ENCODE measurements at regions of chr14 and their contacts with region 1.

Region 1: DNA sequence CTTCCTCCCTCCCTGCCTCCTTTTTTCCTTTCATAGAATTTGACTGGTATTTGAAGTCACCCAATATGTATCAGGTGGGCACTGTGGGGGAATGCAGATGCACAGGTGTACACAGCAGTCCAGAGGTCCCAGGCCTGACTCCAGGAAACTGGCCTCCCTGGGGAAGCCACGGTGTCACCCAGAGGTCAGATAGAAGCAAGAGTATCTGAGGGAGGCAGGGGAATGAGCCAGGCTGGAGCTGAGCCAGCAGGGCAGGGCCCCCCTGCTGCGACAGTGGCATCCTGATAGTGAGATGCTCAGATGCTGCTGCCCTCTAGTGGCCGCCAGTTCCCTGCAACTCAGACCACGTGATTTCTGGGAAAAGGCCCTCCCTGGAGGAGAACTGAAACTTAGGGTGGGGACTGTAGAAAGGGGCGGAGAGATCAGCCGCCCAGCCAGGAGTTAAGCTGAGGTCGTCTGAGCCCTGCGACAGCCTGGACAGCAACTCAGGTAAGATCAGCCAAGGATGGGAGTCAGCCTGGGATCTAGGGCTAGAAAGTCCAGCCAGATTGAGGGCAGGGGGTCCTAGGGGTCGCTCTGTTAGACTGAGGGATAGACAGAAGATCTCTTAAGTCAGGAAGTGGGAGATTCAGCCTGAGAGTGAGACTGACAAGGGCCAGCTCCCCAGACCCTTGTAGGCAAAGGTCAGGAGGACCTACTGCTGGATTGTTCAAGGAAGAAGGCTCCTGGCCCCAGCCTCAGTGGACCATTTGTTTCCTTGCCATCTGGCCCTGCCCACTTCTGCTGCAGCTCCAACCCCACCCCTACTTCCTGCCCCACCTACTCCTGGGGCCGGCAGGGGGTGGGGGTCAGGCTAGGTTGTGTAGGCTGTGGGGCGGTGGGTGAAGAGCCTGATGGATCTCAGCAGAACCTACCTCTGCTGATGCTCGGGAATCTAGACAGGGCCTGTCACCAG is at the start of gene IRF9:
- DNase-seq: peak; percentile 95 to 99 (median 97)
- ATAC-seq: peak; percentile 85
- H3K4me3 ChIP-seq: peak within 1 kb of the TSS; percentile 80 to 90
- H3K4me3 Mint-ChIP-seq: peak within 1 kb of the TSS; percentile 99
- H3K27ac ChIP-seq: peak within 1 kb of the TSS; percentile 92 to 94
- H3K27ac Mint-ChIP-seq: peak within 1 kb of the TSS; percentile 99
- H3K4me1 ChIP-seq: peaks cover 47% of the 10 kb centered on the region
- H3K4me1 Mint-ChIP-seq: peaks cover 49% of the 10 kb centered on the region
- H3K27me3 ChIP-seq: no peaks in the 10 kb centered on the region
- H3K27me3 Mint-ChIP-seq: no peaks in the 10 kb centered on the region
- CTCF ChIP-seq: peak; percentile 92
- total RNA-seq, gene IRF9: 270 to 307 TPM

Region 2: GRCh38 chr14:24013654-24014514 is 147.2 kb before region 1 on chr14:
- CTCF ChIA-PET with region 1: interaction called, 3 read pairs
- POLR2A ChIA-PET with region 1: no interaction called
- intact Hi-C with region 1: loop called (anchors 2 kb)
- DNase-seq: peak in 8 of 9 experiments; percentile 14 to 84 (median 50)
- ATAC-seq: peak; percentile 99
- H3K4me3 ChIP-seq: no peak overlapping the region
- H3K4me3 Mint-ChIP-seq: no peak overlapping the region
- H3K27ac ChIP-seq: no peak overlapping the region
- H3K27ac Mint-ChIP-seq: no peak overlapping the region
- H3K4me1 ChIP-seq: peaks cover 7% of the 10 kb centered on the region
- H3K4me1 Mint-ChIP-seq: peaks cover 25% of the 10 kb centered on the region
- H3K27me3 ChIP-seq: no peaks in the 10 kb centered on the region
- H3K27me3 Mint-ChIP-seq: no peaks in the 10 kb centered on the region
- CTCF ChIP-seq: peak; percentile 93

Region 3: DNA sequence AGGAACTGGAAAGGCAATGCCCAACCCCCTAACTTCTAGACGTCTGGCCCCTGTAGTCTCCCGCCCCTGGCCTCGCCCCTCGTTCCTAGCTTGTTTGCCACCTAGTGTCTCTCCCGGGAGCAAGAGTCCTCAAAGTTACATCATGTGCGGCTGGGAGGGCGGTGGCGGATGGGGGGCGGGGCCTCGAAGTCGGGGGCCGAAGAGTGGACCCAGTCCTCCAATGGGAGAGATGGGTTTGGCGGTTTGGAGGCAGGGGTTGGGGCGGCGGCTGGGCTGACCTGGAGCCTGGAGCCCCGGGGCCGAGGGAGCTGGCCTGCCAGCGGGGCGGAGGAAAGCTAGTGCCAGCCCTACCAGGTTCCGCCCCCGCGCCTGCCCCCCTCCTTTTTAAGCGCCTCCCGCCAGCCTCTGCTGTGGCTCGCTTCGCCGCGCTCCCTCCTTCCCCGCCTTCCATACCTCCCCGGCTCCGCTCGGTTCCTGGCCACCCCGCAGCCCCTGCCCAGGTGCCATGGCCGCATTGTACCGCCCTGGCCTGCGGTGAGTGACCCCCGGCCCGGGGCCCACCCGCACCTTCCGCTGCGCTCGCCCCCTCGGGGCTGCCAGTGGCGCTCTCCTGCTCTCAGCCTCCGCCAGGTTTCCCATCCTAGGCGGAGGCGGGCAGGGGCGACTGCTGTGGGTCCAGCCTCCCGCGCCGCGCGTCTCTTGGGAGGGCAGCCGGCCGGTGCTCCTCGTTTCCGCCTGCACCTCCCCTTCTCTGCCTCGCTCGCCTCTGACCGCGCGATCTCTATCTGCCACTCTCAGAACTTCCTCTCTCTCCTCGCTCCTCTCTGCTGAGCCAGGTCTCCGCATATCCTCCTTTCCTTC is 67.0 kb before region 1 on chr14 and contains the start of gene PCK2:
- CTCF ChIA-PET with region 1: interaction called, 12 read pairs
- POLR2A ChIA-PET with region 1: interaction called, 3 read pairs
- intact Hi-C with region 1: loop called in 1 of 2 experiments (anchors 5 kb)
- DNase-seq: peak; percentile 39 to 82 (median 68)
- ATAC-seq: peak; percentile 79
- H3K4me3 ChIP-seq: peak within 1 kb of the TSS; percentile 69 to 99
- H3K4me3 Mint-ChIP-seq: peak within 1 kb of the TSS; percentile 98
- H3K27ac ChIP-seq: peak within 1 kb of the TSS; percentile 69 to 76
- H3K27ac Mint-ChIP-seq: peak within 1 kb of the TSS; percentile 98
- H3K4me1 ChIP-seq: peaks cover 19% of the 10 kb centered on the region
- H3K4me1 Mint-ChIP-seq: peaks cover 37% of the 10 kb centered on the region
- H3K27me3 ChIP-seq: no peaks in the 10 kb centered on the region
- H3K27me3 Mint-ChIP-seq: no peaks in the 10 kb centered on the region
- CTCF ChIP-seq: no peak
- total RNA-seq, gene PCK2: 4.9 to 5.2 TPM

Region 4: GRCh38 chr14:24135834-24136542 is 25.1 kb before region 1 on chr14 and contains the start of gene PSME1:
- CTCF ChIA-PET with region 1: interaction called, 12 read pairs
- POLR2A ChIA-PET with region 1: interaction called, 14 read pairs
- intact Hi-C with region 1: loop called (anchors 1 kb)
- DNase-seq: peak; percentile 89 to 97 (median 94)
- ATAC-seq: peak; percentile 98
- H3K4me3 ChIP-seq: peak within 1 kb of the TSS; percentile 78 to 91
- H3K4me3 Mint-ChIP-seq: peak within 1 kb of the TSS; percentile 90
- H3K27ac ChIP-seq: peak within 1 kb of the TSS; percentile 81 to 83
- H3K27ac Mint-ChIP-seq: peak within 1 kb of the TSS; percentile 93
- H3K4me1 ChIP-seq: peaks cover 54% of the 10 kb centered on the region
- H3K4me1 Mint-ChIP-seq: peaks cover 65% of the 10 kb centered on the region
- H3K27me3 ChIP-seq: no peaks in the 10 kb centered on the region
- H3K27me3 Mint-ChIP-seq: no peaks in the 10 kb centered on the region
- CTCF ChIP-seq: no peak
- total RNA-seq, gene PSME1: 200 to 207 TPM

Region 5: GRCh38 chr14:24146978-24147760 is 14.0 kb before region 1 on chr14 and contains the start of gene RNF31:
- CTCF ChIA-PET with region 1: interaction called, 53 read pairs
- POLR2A ChIA-PET with region 1: interaction called, 30 read pairs
- intact Hi-C with region 1: loop called (anchors 1 kb)
- DNase-seq: peak; percentile 93 to 99 (median 97)
- ATAC-seq: peak; percentile 89
- H3K4me3 ChIP-seq: peak within 1 kb of the TSS; percentile 96 to 99
- H3K4me3 Mint-ChIP-seq: peak within 1 kb of the TSS; percentile 95
- H3K27ac ChIP-seq: peak within 1 kb of the TSS; percentile 79 to 91
- H3K27ac Mint-ChIP-seq: peak within 1 kb of the TSS; percentile 93
- H3K4me1 ChIP-seq: peaks cover 34% of the 10 kb centered on the region
- H3K4me1 Mint-ChIP-seq: peaks cover 53% of the 10 kb centered on the region
- H3K27me3 ChIP-seq: no peaks in the 10 kb centered on the region
- H3K27me3 Mint-ChIP-seq: no peaks in the 10 kb centered on the region
- CTCF ChIP-seq: no peak
- total RNA-seq, gene RNF31: 45.4 to 51.7 TPM

Region 6: DNA sequence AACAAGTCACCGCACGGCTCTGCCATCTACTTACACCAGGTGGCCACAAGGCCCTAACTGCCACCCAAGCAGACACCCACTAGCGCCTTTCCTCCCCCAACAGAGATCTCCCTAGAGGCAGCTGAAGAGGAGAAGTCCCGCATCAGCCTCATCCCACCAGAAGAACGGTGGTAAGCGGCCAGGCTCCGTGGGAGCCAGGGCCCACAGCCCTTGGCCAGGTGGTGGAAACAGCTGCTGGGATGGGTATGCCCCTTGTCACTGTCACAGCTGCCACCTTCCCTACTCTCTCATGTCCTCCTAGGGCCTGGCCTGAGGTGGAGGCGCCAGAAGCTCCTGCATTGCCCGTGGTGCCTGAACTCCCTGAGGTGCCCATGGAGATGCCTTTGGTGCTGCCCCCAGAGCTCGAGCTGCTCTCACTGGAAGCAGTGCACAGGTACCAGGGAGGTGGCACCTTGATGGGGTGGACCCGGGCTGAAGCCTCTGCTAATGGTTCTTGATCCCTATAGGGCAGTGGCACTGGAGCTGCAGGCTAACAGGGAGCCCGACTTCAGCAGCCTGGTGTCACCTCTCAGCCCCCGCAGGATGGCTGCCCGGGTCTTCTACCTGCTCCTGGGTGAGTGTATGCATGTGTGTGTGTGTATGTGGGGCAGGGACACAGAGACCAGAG is 18.3 kb after region 1 on chr14:
- CTCF ChIA-PET with region 1: interaction called, 11 read pairs
- POLR2A ChIA-PET with region 1: interaction called, 4 read pairs
- intact Hi-C with region 1: no loop called
- DNase-seq: no peak
- ATAC-seq: no peak
- H3K4me3 ChIP-seq: no peak overlapping the region
- H3K4me3 Mint-ChIP-seq: no peak overlapping the region
- H3K27ac ChIP-seq: no peak overlapping the region
- H3K27ac Mint-ChIP-seq: peak overlapping the region; percentile 14
- H3K4me1 ChIP-seq: no peaks in the 10 kb centered on the region
- H3K4me1 Mint-ChIP-seq: peaks cover 2% of the 10 kb centered on the region
- H3K27me3 ChIP-seq: no peaks in the 10 kb centered on the region
- H3K27me3 Mint-ChIP-seq: no peaks in the 10 kb centered on the region
- CTCF ChIP-seq: no peak

Region 7: DNA sequence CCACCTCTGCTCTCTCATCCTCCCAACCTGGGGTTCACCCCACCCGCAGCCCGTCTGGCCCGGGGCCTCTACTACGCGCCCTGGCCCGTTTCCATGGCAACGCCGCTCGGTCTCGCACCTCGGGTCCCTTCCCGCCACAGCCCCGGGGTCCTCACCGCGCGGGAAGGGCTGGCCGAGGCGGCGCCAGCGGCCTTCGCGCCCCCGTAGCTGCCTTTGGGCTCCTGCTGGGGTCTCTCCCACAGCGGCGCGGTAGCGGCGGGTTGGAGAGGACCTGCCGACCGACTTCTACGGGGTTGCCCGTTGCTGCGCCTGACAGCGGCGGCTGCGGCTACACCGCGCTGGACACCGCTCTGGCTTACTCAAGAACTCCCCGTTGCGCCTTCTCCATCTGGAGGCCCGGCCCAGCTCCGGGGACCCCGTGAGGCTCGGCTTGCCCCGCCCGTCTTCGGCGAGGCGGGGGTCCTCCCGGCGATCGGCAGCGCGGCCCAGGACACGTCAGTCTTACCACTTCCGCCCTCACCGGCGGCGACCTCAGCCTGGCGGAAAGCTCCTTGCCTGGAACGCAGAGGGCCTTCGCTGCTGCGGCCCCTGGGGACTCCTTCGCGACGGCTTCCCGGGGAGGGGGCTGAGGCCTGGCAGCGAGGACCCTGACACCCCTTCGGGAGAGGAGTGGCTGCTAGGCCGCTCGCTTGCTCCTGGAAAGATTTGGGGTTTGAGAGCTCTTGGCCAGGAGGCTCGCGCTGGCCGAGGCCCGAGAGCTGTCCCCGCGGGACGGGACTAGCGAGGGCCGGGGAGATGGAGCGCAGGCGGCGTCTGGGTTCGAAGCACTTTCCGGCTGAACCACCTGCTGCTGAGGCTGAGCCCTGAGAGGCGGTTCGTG is 34.3 kb after region 1 on chr14 and contains the start of gene TM9SF1:
- CTCF ChIA-PET with region 1: interaction called, 27 read pairs
- POLR2A ChIA-PET with region 1: interaction called, 20 read pairs
- intact Hi-C with region 1: loop called in 1 of 2 experiments (anchors 1 kb)
- DNase-seq: peak; percentile 81 to 96 (median 91)
- ATAC-seq: peak; percentile 83
- H3K4me3 ChIP-seq: peak within 1 kb of the TSS; percentile 87 to 94
- H3K4me3 Mint-ChIP-seq: peak within 1 kb of the TSS; percentile 94
- H3K27ac ChIP-seq: peak within 1 kb of the TSS; percentile 99 to 100
- H3K27ac Mint-ChIP-seq: peak within 1 kb of the TSS; percentile 98
- H3K4me1 ChIP-seq: peaks cover 31% of the 10 kb centered on the region
- H3K4me1 Mint-ChIP-seq: peaks cover 50% of the 10 kb centered on the region
- H3K27me3 ChIP-seq: no peaks in the 10 kb centered on the region
- H3K27me3 Mint-ChIP-seq: no peaks in the 10 kb centered on the region
- CTCF ChIP-seq: no peak
- total RNA-seq, gene TM9SF1: 17.5 to 20.4 TPM